ENCODE measurements at regions of chr10 and their contacts with region 1.

Region 1: DNA sequence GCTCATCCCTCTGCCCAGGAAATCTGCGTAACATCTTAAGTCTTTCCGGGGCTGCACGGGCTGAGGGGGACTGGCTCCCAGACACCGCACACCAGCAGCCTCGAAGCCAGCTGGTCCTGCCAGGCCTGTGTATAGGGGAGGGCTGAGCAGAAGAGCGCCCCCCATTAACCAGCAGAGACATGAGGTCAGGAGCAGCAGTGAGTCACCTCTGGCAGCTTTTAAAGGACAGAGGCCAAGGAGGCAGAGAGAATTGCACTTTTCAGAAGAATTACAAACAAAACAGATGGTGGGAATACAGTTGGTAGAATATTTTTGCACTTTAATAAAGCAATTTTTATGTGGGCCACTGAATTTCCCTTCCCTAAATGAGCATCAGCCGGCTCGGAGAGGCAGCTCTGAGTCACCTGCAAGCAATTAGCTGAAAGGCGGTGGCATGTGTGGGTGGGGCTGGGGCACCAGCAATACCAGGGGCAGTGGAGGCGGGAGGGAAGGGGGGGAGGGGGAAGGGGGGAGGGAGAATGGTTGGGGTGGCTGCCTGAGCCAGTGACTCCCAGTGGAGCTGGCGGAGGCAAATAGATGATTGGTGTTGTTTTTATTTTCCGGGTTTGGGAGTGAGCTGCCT is 39.1 kb downstream of the GOLGA7B start:
- DNase-seq: peak; percentile 53
- H3K4me3 ChIP-seq: no peak overlapping the region
- H3K27ac ChIP-seq: no peak overlapping the region
- H3K4me1 ChIP-seq: peaks cover 10% of the 10 kb centered on the region
- H3K27me3 ChIP-seq: no peaks in the 10 kb centered on the region
- CTCF ChIP-seq: no peak

Region 2: DNA sequence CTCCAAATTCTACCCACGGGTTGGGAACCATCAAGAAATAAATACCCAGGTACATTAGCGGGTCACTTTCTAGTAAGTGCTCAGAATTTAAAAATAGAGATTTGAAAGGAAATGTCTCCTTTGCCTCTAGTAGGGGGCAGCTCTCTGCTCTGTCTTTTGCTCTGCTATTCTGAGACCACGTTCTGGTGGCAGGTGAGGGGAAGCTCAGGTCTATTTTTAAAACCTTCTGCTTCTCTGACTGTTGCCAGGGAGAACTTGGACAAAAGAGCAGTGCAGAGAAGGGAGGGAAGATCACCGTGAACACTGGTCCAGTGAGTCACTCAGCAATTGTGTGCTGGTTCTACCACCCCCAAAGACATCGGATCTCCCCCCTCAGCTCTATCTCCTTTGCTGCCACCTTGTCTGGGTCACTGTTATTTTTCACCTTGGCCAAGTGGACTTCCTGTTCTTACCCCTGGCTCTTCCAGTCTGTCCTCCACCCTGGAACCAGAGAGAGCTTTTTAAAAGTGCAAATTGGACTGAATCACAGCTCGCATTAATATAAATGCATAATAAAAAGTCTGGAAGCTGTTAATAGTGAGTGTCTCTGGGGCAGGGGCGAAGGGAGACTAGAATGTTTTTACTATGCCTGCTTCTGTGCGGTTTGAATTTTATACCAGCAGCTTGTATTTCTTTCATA is 451.6 kb after region 1 on chr10:
- CTCF ChIA-PET with region 1: no interaction called
- POLR2A ChIA-PET with region 1: interaction called, 21 read pairs
- intact Hi-C with region 1: no loop called
- DNase-seq: no peak
- H3K4me3 ChIP-seq: no peak overlapping the region
- H3K27ac ChIP-seq: no peak overlapping the region
- H3K4me1 ChIP-seq: no peaks in the 10 kb centered on the region
- H3K27me3 ChIP-seq: peaks cover 11% of the 10 kb centered on the region
- CTCF ChIP-seq: no peak

Measured in A673 (cell line).